ENCODE measurements at regions of chr13 and their contacts with region 1.

Region 1: DNA sequence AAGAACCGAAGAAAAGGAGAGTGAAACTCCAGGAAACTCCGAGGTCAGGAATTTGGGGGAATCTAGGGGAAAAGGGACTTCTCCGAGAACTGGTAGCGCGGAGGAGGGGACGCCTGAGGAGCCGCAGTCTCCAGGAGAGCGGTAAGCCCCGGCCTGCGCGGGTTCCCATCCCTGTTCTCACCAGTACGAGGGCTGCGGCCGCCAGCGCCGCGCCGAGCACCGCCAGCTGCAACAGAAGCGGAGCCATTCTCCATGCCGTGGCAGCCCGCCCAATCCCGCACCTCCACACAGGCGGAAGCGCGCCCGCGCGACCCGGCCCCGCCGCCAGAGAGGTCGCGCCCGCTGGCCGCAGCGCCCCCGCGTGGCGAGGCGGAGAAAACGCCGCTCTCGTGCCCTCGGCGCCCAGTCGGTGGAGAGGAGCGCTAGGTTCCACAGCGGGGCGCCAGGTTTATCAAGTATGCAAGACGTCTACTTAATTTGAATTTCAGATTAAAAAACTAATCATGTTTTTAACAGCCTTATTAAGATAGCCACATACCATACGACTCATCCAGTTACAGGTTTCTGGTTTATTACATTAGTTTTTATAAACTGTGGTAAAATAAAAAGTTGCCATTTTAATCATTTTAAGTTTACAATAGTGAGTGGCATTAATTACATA is at the start of gene ALG5:
- DNase-seq: peak; percentile 93 to 97 (median 95)
- H3K4me3 ChIP-seq: peak within 1 kb of the TSS; percentile 90 to 91
- H3K4me3 Mint-ChIP-seq: peak within 1 kb of the TSS; percentile 98 to 100 (median 100)
- H3K27ac ChIP-seq: peak within 1 kb of the TSS; percentile 92
- H3K27ac Mint-ChIP-seq: peak within 1 kb of the TSS; percentile 99 to 100 (median 100)
- H3K4me1 ChIP-seq: peaks cover 32% of the 10 kb centered on the region
- H3K4me1 Mint-ChIP-seq: peaks cover 27 to 64% (median 38%) of the 10 kb centered on the region in 4 donors
- H3K27me3 ChIP-seq: no peaks in the 10 kb centered on the region
- H3K27me3 Mint-ChIP-seq: no peaks in the 10 kb centered on the region
- total RNA-seq, gene ALG5: 23.3 to 25.5 TPM

Region 2: GRCh38 chr13:36346222-36347083 is 652.7 kb before region 1 on chr13 and contains the start of gene SPART:
- CTCF ChIA-PET with region 1: interaction called, 4 read pairs
- POLR2A ChIA-PET with region 1: interaction called, 7 read pairs
- intact Hi-C with region 1: loop called (anchors 1 kb)
- DNase-seq: peak; percentile 88 to 91 (median 89)
- H3K4me3 ChIP-seq: peak within 1 kb of the TSS; percentile 42 to 84
- H3K4me3 Mint-ChIP-seq: peak within 1 kb of the TSS; percentile 89 to 98 (median 96)
- H3K27ac ChIP-seq: peak within 1 kb of the TSS; percentile 85
- H3K27ac Mint-ChIP-seq: peak within 1 kb of the TSS; percentile 98 to 100 (median 99)
- H3K4me1 ChIP-seq: peaks cover 33% of the 10 kb centered on the region
- H3K4me1 Mint-ChIP-seq: peaks cover 28 to 44% (median 39%) of the 10 kb centered on the region in 4 donors
- H3K27me3 ChIP-seq: no peaks in the 10 kb centered on the region
- H3K27me3 Mint-ChIP-seq: peaks cover 4 to 5% of the 10 kb centered on the region in 2 donors
- total RNA-seq, gene SPART: 62.4 to 67.0 TPM

Region 3: GRCh38 chr13:36981156-36981743 is 17.9 kb before region 1 on chr13:
- CTCF ChIA-PET with region 1: interaction called, 5 read pairs
- POLR2A ChIA-PET with region 1: interaction called, 15 read pairs
- intact Hi-C with region 1: no loop called
- DNase-seq: peak in 1 of 5 donors; percentile 2
- H3K4me3 ChIP-seq: no peak overlapping the region
- H3K4me3 Mint-ChIP-seq: no peak overlapping the region
- H3K27ac ChIP-seq: no peak overlapping the region
- H3K27ac Mint-ChIP-seq: peak overlapping the region in 1 of 7 donors; percentile 37
- H3K4me1 ChIP-seq: no peaks in the 10 kb centered on the region
- H3K4me1 Mint-ChIP-seq: peaks cover 0 to 5% (median 1%) of the 10 kb centered on the region in 4 donors
- H3K27me3 ChIP-seq: no peaks in the 10 kb centered on the region
- H3K27me3 Mint-ChIP-seq: no peaks in the 10 kb centered on the region

Region 4: GRCh38 chr13:37029617-37030016 is 30.4 kb after region 1 on chr13:
- CTCF ChIA-PET with region 1: interaction called, 4 read pairs
- POLR2A ChIA-PET with region 1: interaction called, 12 read pairs
- intact Hi-C with region 1: no loop called
- DNase-seq: no peak
- H3K4me3 ChIP-seq: no peak overlapping the region
- H3K4me3 Mint-ChIP-seq: no peak overlapping the region
- H3K27ac ChIP-seq: no peak overlapping the region
- H3K27ac Mint-ChIP-seq: no peak overlapping the region
- H3K4me1 ChIP-seq: no peaks in the 10 kb centered on the region
- H3K4me1 Mint-ChIP-seq: no peaks in the 10 kb centered on the region
- H3K27me3 ChIP-seq: no peaks in the 10 kb centered on the region
- H3K27me3 Mint-ChIP-seq: no peaks in the 10 kb centered on the region

Region 5: GRCh38 chr13:37216331-37216730 is 217.1 kb after region 1 on chr13:
- CTCF ChIA-PET with region 1: no interaction called
- POLR2A ChIA-PET with region 1: no interaction called
- intact Hi-C with region 1: no loop called
- DNase-seq: no peak
- H3K4me3 ChIP-seq: no peak overlapping the region
- H3K4me3 Mint-ChIP-seq: no peak overlapping the region
- H3K27ac ChIP-seq: no peak overlapping the region
- H3K27ac Mint-ChIP-seq: no peak overlapping the region
- H3K4me1 ChIP-seq: no peaks in the 10 kb centered on the region
- H3K4me1 Mint-ChIP-seq: no peaks in the 10 kb centered on the region
- H3K27me3 ChIP-seq: no peaks in the 10 kb centered on the region
- H3K27me3 Mint-ChIP-seq: no peaks in the 10 kb centered on the region

Region 6: GRCh38 chr13:38045307-38046048 is 1046.3 kb after region 1 on chr13:
- CTCF ChIA-PET with region 1: no interaction called
- POLR2A ChIA-PET with region 1: no interaction called
- intact Hi-C with region 1: no loop called
- DNase-seq: no peak
- H3K4me3 ChIP-seq: no peak overlapping the region
- H3K4me3 Mint-ChIP-seq: no peak overlapping the region
- H3K27ac ChIP-seq: no peak overlapping the region
- H3K27ac Mint-ChIP-seq: no peak overlapping the region
- H3K4me1 ChIP-seq: no peaks in the 10 kb centered on the region
- H3K4me1 Mint-ChIP-seq: no peaks in the 10 kb centered on the region
- H3K27me3 ChIP-seq: no peaks in the 10 kb centered on the region
- H3K27me3 Mint-ChIP-seq: no peaks in the 10 kb centered on the region

Region 7: GRCh38 chr13:38349390-38350113 is 1350.4 kb after region 1 on chr13 and contains the start of gene UFM1:
- CTCF ChIA-PET with region 1: interaction called, 5 read pairs
- POLR2A ChIA-PET with region 1: interaction called, 13 read pairs
- intact Hi-C with region 1: no loop called
- DNase-seq: peak; percentile 90 to 94 (median 92)
- H3K4me3 ChIP-seq: peak within 1 kb of the TSS; percentile 75 to 87
- H3K4me3 Mint-ChIP-seq: peak within 1 kb of the TSS; percentile 95 to 99 (median 98)
- H3K27ac ChIP-seq: peak within 1 kb of the TSS; percentile 90
- H3K27ac Mint-ChIP-seq: peak within 1 kb of the TSS; percentile 97 to 99 (median 98)
- H3K4me1 ChIP-seq: peaks cover 31% of the 10 kb centered on the region
- H3K4me1 Mint-ChIP-seq: peaks cover 26 to 42% (median 35%) of the 10 kb centered on the region in 4 donors
- H3K27me3 ChIP-seq: no peaks in the 10 kb centered on the region
- H3K27me3 Mint-ChIP-seq: peaks cover 0 to 2% of the 10 kb centered on the region in 2 donors
- total RNA-seq, gene UFM1: 81.8 to 82.1 TPM